Gastrocnemius medialis (tissue), 4 donors: ENCODE measurements at regions of chr12 and their contacts with region 1.

Region 1: DNA sequence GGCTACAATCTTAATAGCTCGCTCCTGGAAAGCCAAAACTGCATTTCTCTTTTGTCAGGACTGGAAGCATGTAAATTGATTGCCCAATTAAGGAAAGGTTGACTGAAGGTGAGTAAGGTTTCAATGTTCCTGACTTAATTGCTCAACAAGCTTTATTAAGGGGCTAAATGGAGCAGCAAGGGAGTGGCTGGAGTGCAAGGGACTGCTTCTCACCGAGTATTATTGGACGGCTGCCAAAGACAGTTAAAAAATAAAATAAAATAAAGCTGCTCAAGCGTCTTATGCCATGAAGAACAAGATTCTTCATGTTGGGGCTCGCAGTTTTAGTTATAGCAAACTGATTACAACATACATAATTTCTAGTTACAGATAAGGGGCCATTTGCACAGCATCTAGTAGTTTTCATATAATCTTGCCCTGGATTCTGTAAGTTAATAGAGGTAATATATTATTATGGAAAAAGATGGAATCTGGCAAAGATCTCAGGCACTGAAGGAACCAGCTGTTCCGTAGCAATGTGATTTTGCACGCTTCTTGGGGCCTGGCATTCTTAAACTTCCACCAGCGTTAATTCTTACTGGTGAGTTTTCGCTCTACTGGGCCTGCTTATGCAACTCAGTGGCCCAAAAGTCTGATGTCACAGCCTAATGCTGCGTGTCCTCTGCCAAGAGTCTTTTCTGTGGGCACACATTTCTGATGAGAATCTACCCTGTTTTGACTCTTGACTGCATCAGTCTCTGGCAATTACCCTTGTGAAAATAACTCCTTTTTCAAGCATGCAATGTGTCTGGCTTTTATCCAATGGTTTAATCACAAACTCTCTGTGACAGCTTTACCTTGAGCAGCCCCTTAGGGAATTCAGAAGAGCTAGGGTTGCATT is 108.5 kb downstream of the SLC38A1 start:
- DNase-seq: peak in 1 of 2 donors; percentile 28
- ATAC-seq: peak; percentile 57 to 62
- H3K4me3 ChIP-seq: no peak overlapping the region
- H3K27ac ChIP-seq: no peak overlapping the region
- H3K4me1 ChIP-seq: peaks cover 5 to 15% of the 10 kb centered on the region in 2 donors
- H3K27me3 ChIP-seq: no peaks in the 10 kb centered on the region
- CTCF ChIP-seq: no peak
- POLR2A ChIP-seq: no peak

Region 2: GRCh38 chr12:46246021-46246700 is 85.8 kb after region 1 on chr12:
- in situ Hi-C with region 1: no loop called
- intact Hi-C with region 1: no loop called
- DNase-seq: no peak
- ATAC-seq: no peak
- H3K4me3 ChIP-seq: no peak overlapping the region
- H3K27ac ChIP-seq: no peak overlapping the region
- H3K4me1 ChIP-seq: peaks cover 0 to 3% of the 10 kb centered on the region in 2 donors
- H3K27me3 ChIP-seq: no peaks in the 10 kb centered on the region
- CTCF ChIP-seq: no peak
- POLR2A ChIP-seq: no peak

Region 3: DNA sequence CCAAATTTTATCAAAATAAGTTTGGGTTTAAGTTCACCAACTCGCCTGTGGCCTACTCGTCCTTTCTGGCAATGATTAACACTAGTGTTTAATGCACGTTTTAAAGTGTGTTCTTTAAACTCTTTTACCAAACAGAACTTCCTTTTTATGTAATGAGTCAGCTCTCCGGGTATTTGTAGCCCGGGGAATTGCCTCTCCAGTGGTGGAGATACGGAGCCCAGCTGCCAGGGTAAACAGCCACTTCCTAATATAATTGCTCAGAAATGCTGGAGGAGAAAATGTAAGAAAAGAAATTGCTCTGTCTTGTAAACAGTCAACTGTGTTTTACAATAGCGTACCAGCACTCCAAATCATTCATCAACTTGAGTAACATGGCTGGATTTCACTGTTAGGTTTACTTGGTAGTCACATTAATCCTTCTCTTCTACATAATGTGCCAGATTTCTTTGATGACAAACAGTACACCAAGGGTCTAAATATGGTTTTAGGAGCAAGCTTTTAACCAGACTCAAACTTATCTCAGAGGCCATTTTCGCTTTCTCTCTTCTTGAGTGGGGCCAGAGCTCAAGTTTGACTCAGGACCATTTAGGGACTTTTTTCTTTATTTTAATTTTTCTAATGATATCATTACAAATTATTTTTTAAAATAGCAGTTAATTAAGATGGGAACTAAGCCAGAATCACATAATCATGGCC is 313.4 kb after region 1 on chr12:
- in situ Hi-C with region 1: no loop called
- intact Hi-C with region 1: loop called (anchors 10 kb)
- DNase-seq: peak; percentile 4 to 49
- ATAC-seq: peak; percentile 66 to 69
- H3K4me3 ChIP-seq: peak overlapping the region in 3 of 4 donors; percentile 4 to 23 (median 10)
- H3K27ac ChIP-seq: peak overlapping the region; percentile 75 to 80 (median 78)
- H3K4me1 ChIP-seq: peaks cover 37 to 41% of the 10 kb centered on the region in 2 donors
- H3K27me3 ChIP-seq: no peaks in the 10 kb centered on the region
- CTCF ChIP-seq: no peak
- POLR2A ChIP-seq: no peak